GM10248 (cell line): ENCODE measurements at regions of chr4 and their contacts with region 1.

Region 1: GRCh38 chr4:39961311-39961877 is 16.3 kb downstream of the PDS5A start:
- DNase-seq: no peak
- CTCF ChIP-seq: no peak

Region 2: GRCh38 chr4:39476187-39476895 is 485.1 kb before region 1 on chr4:
- CTCF ChIA-PET with region 1: no interaction called
- POLR2A ChIA-PET with region 1: no interaction called
- DNase-seq: no peak
- CTCF ChIP-seq: no peak

Region 3: GRCh38 chr4:39947423-39947822 is 14.0 kb before region 1 on chr4:
- CTCF ChIA-PET with region 1: interaction called, 11 read pairs
- POLR2A ChIA-PET with region 1: no interaction called
- DNase-seq: no peak
- CTCF ChIP-seq: no peak

Region 4: DNA sequence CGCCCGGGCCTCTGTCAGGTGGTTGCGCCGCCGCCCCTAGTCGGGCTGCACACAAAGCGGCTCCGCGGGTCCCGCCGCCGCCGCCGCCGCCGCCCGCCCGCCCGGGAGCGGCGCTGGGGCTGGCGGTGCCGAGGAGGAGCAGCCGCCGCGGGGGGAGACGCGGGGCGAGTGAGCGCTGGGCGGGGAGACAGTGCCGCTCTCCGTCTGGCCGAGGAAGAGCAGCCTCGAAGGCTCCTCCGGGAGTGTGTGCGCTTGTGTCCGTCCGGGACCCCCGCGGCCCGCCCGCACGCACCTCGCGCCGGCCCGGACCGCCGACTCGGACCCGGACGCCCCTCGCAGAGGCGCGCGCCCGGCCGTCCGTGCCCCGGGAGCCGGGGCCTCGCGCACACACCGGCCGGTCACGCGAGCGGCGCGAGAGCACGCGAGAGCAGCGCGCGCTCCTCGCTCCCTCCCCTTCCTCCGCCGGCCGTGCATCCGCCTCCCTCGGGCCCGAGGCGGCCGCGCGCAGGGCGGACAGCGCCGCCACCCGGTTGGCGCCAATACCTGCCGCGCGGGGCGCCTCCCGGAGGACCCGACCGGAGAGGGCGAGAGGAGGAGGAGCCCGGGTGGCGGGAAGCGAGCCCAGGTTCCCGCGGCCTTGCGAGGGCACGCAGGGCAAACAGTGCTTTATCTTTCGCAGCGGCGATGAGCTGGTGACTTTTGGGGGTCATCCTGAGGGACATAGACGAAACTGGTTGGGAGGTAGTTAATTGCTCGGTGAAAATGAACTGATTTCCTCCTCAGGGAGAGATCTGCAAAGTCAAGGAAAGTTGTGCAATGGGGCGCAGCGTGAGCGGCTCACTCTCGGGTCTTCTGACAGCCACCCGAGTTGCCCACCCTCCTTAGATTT is 16.3 kb after region 1 on chr4 and contains the start of gene PDS5A:
- CTCF ChIA-PET with region 1: interaction called, 18 read pairs
- POLR2A ChIA-PET with region 1: no interaction called
- DNase-seq: peak; percentile 97
- CTCF ChIP-seq: peak; percentile 99